ENCODE measurements at regions of chr17 and their contacts with region 1.

Region 1: GRCh38 chr17:50686494-50687199 is 21.1 kb downstream of the ANKRD40 start:
- DNase-seq: peak; percentile 98
- ATAC-seq: peak; percentile 78
- H3K4me3 ChIP-seq: peak overlapping the region; percentile 33 to 75 (median 66)
- H3K27ac ChIP-seq: peak overlapping the region; percentile 99
- H3K4me1 ChIP-seq: peaks cover 98% of the 10 kb centered on the region
- H3K27me3 ChIP-seq: no peaks in the 10 kb centered on the region; a peak in 1 of 5 replicates
- CTCF ChIP-seq: 0 out of 2 replicates have a peak, but pooled peaks have one; percentile 10
- EP300 ChIP-seq: peak; percentile 94
- POLR2A ChIP-seq: peak; percentile 86 to 98
- RAD21 ChIP-seq: peak; percentile 6; the same call in 1 of the 2 replicates

Region 2: DNA sequence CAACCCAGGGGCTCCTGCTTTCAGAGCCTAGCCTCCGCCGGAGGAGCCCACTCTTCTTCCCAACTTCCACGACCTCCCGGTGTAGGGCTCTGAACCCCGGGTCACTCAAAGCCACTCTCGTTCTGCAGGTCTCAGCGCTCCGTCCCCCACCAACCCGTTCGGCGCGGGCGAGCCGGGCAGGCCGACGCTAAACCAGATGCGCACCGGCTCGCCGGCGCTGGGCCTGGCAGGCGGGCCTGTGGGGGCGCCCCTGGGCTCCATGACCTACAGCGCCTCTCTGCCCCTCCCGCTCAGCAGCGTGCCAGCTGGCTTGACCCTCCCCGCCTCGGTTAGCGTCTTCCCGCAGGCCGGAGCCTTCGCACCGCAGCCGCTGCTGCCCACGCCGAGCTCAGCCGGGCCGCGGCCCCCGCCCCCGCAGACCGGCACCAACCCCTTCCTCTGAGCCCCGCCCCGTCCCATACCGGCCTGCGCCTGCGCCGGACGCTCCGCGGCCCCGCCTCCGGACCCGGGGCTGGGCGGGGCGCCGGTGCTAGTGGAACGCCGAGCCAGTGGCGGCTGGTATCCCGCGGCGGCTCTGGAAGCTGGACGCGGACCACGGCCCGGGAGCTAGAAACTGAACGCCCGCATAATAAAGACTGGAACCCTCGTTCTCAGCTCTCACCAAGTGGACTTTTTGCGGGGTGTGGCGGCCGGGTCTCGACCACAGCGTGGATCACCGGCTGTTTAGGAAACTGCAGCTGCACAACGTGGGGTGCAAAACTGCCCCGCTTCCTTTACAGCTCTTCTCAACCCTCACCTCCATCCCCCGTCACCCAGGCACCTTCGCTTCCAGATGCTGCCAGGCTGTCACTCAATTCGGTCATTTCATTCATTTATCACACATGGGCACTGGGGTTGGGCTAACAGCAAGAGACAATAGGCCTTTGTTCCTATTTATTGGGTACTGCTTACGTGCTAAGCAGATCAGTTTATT is 144.6 kb before region 1 on chr17:
- CTCF ChIA-PET with region 1: interaction called, 8 read pairs
- POLR2A ChIA-PET with region 1: interaction called, 79 read pairs
- in situ Hi-C with region 1: loop called (anchors 5 kb)
- intact Hi-C with region 1: no loop called
- DNase-seq: peak; percentile 81
- ATAC-seq: peak; percentile 69
- H3K4me3 ChIP-seq: peak overlapping the region; percentile 73 to 87 (median 78)
- H3K27ac ChIP-seq: peak overlapping the region; percentile 97
- H3K4me1 ChIP-seq: peaks cover 80% of the 10 kb centered on the region
- H3K27me3 ChIP-seq: no peaks in the 10 kb centered on the region; a peak in 1 of 5 replicates
- CTCF ChIP-seq: peak; percentile 54; the same call in 1 of the 2 replicates
- EP300 ChIP-seq: 0 out of 4 replicates have a peak, but pooled peaks of 1 of the 2 experiments have one; percentile 5
- POLR2A ChIP-seq: peak; percentile 90
- RAD21 ChIP-seq: peak; percentile 69; the same call in 1 of the 2 replicates

Region 3: GRCh38 chr17:50626037-50626574 is 60.5 kb before region 1 on chr17:
- CTCF ChIA-PET with region 1: interaction called, 18 read pairs
- POLR2A ChIA-PET with region 1: interaction called, 839 read pairs
- in situ Hi-C with region 1: loop called (anchors 5 kb)
- intact Hi-C with region 1: no loop called
- DNase-seq: peak; percentile 84
- ATAC-seq: peak; percentile 82
- H3K4me3 ChIP-seq: peak overlapping the region; percentile 40 to 74 (median 45); a peak in 5 of 6 replicates
- H3K27ac ChIP-seq: no peak overlapping the region
- H3K4me1 ChIP-seq: peaks cover 63% of the 10 kb centered on the region
- H3K27me3 ChIP-seq: peaks cover 0 to 34% of the 10 kb centered on the region in 2 experiments; a peak in 4 of 5 replicates
- CTCF ChIP-seq: peak; percentile 99
- EP300 ChIP-seq: no peak
- POLR2A ChIP-seq: no peak
- RAD21 ChIP-seq: peak; percentile 97

Region 4: GRCh38 chr17:50653738-50654137 is 32.9 kb before region 1 on chr17:
- CTCF ChIA-PET with region 1: no interaction called
- POLR2A ChIA-PET with region 1: interaction called, 11 read pairs
- in situ Hi-C with region 1: no loop called
- intact Hi-C with region 1: no loop called
- DNase-seq: no peak
- ATAC-seq: no peak
- H3K4me3 ChIP-seq: no peak overlapping the region
- H3K27ac ChIP-seq: no peak overlapping the region
- H3K4me1 ChIP-seq: peaks cover 19% of the 10 kb centered on the region
- H3K27me3 ChIP-seq: no peaks in the 10 kb centered on the region
- CTCF ChIP-seq: no peak
- EP300 ChIP-seq: no peak
- POLR2A ChIP-seq: no peak
- RAD21 ChIP-seq: no peak

Region 5: DNA sequence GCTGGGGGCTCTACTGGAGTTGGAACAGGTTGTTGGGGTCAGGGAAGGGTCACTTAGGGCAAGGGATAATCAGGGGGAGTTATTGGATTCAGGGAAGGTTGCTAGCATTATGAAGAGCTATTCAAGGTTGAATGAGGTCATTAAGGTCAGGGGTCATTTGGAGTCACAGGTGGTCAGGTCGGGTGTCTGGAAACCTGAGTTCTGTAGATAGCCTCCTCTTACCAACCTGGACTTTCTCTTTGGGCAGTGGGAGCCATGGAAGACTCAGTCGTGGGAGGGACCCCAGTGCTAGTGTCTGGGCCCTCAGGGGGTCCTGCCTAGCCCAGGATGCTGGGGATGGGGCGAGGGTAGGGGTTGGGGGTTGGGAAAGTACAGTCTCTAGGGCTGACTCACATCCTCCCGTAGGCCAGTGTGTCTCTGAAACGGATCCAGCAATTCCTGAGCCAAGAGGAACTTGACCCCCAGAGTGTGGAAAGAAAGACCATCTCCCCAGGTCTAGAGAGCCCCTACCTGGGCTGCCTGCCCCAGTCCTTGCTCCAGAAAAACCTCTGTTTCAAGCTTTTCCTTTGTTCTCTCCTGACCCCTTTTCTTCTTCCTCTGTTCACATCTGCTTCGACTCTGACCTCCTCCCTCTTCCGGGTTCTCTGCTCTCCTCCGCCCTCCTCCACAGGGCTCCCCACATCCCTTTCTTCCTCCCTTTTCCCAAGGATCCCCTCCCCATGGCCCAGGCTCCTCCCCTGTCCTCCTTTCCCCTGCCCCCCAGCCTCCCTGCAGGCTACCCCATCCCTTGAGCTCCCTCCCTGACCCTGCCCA is 18.4 kb before region 1 on chr17:
- CTCF ChIA-PET with region 1: no interaction called
- POLR2A ChIA-PET with region 1: interaction called, 140 read pairs
- in situ Hi-C with region 1: no loop called
- intact Hi-C with region 1: no loop called
- DNase-seq: no peak
- ATAC-seq: peak; percentile 15
- H3K4me3 ChIP-seq: 0 out of 6 replicates have a peak overlapping the region, but pooled peaks of 1 of the 3 experiments have one; percentile 5
- H3K27ac ChIP-seq: peak overlapping the region; percentile 19
- H3K4me1 ChIP-seq: peaks cover 70% of the 10 kb centered on the region
- H3K27me3 ChIP-seq: no peaks in the 10 kb centered on the region
- CTCF ChIP-seq: no peak
- EP300 ChIP-seq: no peak
- POLR2A ChIP-seq: no peak
- RAD21 ChIP-seq: no peak

Region 6: DNA sequence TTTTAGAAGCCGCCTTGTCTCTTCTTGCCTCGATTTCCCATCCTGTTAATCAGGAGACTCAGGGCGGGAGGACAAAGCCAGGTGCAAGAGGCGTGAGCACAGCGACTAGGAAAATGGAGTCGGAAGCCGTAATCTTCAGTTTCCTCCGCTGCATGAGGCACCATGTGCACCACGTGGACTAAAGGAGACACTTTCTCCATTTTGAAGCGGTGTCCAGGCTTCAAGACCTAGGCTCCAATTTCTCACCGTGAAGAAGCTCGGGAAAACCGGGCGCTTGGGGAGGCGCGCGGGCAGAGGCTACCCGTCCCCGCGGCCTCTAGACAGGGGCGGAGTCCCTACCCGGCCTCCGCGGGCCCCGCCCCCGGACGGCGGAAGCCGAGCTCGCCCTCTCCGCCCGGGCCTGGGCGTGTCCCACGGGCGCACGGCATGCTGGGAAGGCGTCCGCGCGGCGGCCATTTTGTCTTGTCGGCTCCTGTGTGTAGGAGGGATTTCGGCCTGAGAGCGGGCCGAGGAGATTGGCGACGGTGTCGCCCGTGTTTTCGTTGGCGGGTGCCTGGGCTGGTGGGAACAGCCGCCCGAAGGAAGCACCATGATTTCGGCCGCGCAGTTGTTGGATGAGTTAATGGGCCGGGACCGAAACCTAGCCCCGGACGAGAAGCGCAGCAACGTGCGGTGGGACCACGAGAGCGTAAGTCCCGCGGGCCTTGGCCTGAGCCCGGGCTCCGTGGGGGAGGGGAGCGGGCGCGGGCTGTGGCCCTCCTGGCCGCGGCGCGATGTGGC is 32.7 kb after region 1 on chr17 and contains the start of gene LUC7L3:
- CTCF ChIA-PET with region 1: no interaction called
- POLR2A ChIA-PET with region 1: interaction called, 19 read pairs
- in situ Hi-C with region 1: no loop called
- intact Hi-C with region 1: no loop called
- DNase-seq: peak; percentile 92
- ATAC-seq: peak; percentile 88
- H3K4me3 ChIP-seq: peak within 1 kb of the TSS; percentile 82 to 96 (median 94)
- H3K27ac ChIP-seq: peak within 1 kb of the TSS; percentile 95
- H3K4me1 ChIP-seq: peaks cover 66% of the 10 kb centered on the region
- H3K27me3 ChIP-seq: no peaks in the 10 kb centered on the region
- CTCF ChIP-seq: no peak
- EP300 ChIP-seq: peak; percentile 36 to 50; a peak in 3 of 4 replicates
- POLR2A ChIP-seq: peak; percentile 94 to 96
- RAD21 ChIP-seq: peak; percentile 4; the same call in 1 of the 2 replicates
- total RNA-seq, gene LUC7L3: 60.2 and 108 TPM in 2 replicates

Region 7: GRCh38 chr17:50834429-50835300 is 148.0 kb after region 1 on chr17:
- CTCF ChIA-PET with region 1: no interaction called
- POLR2A ChIA-PET with region 1: no interaction called
- in situ Hi-C with region 1: no loop called
- intact Hi-C with region 1: no loop called
- DNase-seq: no peak
- ATAC-seq: no peak
- H3K4me3 ChIP-seq: no peak overlapping the region; a peak in 1 of 6 replicates
- H3K27ac ChIP-seq: no peak overlapping the region
- H3K4me1 ChIP-seq: peaks cover 45% of the 10 kb centered on the region
- H3K27me3 ChIP-seq: peaks cover 26 to 94% of the 10 kb centered on the region in 2 experiments
- CTCF ChIP-seq: no peak
- EP300 ChIP-seq: no peak
- POLR2A ChIP-seq: no peak
- RAD21 ChIP-seq: no peak

Region 8: GRCh38 chr17:50883850-50884438 is 197.3 kb after region 1 on chr17:
- CTCF ChIA-PET with region 1: no interaction called
- POLR2A ChIA-PET with region 1: no interaction called
- in situ Hi-C with region 1: no loop called
- intact Hi-C with region 1: no loop called
- DNase-seq: no peak
- ATAC-seq: peak; percentile 47
- H3K4me3 ChIP-seq: peak overlapping the region; percentile 2 to 54 (median 41); a peak in 4 of 6 replicates
- H3K27ac ChIP-seq: peak overlapping the region; percentile 67
- H3K4me1 ChIP-seq: peaks cover 62% of the 10 kb centered on the region
- H3K27me3 ChIP-seq: no peaks in the 10 kb centered on the region
- CTCF ChIP-seq: no peak
- EP300 ChIP-seq: no peak; a peak in 1 of 4 replicates
- POLR2A ChIP-seq: no peak
- RAD21 ChIP-seq: no peak